T-cell (primary cell): ENCODE measurements at regions of chr19 and their contacts with region 1.

Region 1: GRCh38 chr19:44512326-44513298 is 12.3 kb upstream of the ZNF180 start:
- DNase-seq: peak in 3 of 35 experiments; percentile 4 to 13 (median 9)
- ATAC-seq: no peak
- H3K4me3 ChIP-seq: no peak overlapping the region
- H3K4me3 Mint-ChIP-seq: no peak overlapping the region
- H3K27ac ChIP-seq: no peak overlapping the region
- H3K27ac Mint-ChIP-seq: no peak overlapping the region
- H3K4me1 ChIP-seq: no peaks in the 10 kb centered on the region
- H3K4me1 Mint-ChIP-seq: no peaks in the 10 kb centered on the region
- H3K27me3 ChIP-seq: peaks cover 0 to 16% of the 10 kb centered on the region in 2 experiments
- H3K27me3 Mint-ChIP-seq: peaks cover 21 to 37% of the 10 kb centered on the region in 2 donors

Region 2: GRCh38 chr19:43983912-43984686 is 528.5 kb before region 1 on chr19 and contains the start of gene ZNF155:
- CTCF ChIA-PET with region 1: no interaction called
- POLR2A ChIA-PET with region 1: interaction called in 1 of 2 experiments, 10 read pairs
- DNase-seq: peak; percentile 26 to 82 (median 51)
- ATAC-seq: peak; percentile 92 to 98 (median 96)
- H3K4me3 ChIP-seq: peak within 1 kb of the TSS; percentile 56 to 91
- H3K4me3 Mint-ChIP-seq: peak within 1 kb of the TSS; percentile 88 to 99 (median 95)
- H3K27ac ChIP-seq: peak within 1 kb of the TSS; percentile 46
- H3K27ac Mint-ChIP-seq: peak within 1 kb of the TSS; percentile 86 to 91
- H3K4me1 ChIP-seq: peaks cover 2 to 12% of the 10 kb centered on the region in 2 experiments
- H3K4me1 Mint-ChIP-seq: peaks cover 3 to 21% (median 12%) of the 10 kb centered on the region in 3 donors
- H3K27me3 ChIP-seq: no peaks in the 10 kb centered on the region
- H3K27me3 Mint-ChIP-seq: no peaks in the 10 kb centered on the region
- total RNA-seq, gene ZNF155: 4.6 to 12.4 (median 11.3) TPM

Region 3: DNA sequence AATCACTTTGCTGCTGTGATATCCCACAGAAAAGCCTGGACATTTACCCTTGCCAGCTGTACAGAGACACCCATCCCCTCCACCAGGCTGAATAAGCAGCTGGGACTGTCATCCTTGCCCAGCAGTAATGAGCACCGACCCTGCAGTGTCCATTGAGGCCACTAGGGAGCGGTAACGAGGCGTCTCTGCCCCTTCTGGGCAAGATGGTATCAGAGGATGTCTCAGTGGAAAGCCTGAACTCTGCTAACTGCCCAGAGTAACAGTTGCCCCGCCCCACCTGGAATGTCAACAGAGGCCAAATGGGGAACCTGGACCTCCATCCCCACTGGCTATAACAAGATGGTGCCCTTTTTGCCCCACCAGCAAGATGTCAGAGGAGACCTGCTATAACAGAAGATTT is 39.7 kb after region 1 on chr19:
- CTCF ChIA-PET with region 1: no interaction called
- POLR2A ChIA-PET with region 1: no interaction called
- DNase-seq: peak in 9 of 35 experiments; percentile 3 to 15 (median 7)
- ATAC-seq: no peak
- H3K4me3 ChIP-seq: no peak overlapping the region
- H3K4me3 Mint-ChIP-seq: no peak overlapping the region
- H3K27ac ChIP-seq: no peak overlapping the region
- H3K27ac Mint-ChIP-seq: no peak overlapping the region
- H3K4me1 ChIP-seq: no peaks in the 10 kb centered on the region
- H3K4me1 Mint-ChIP-seq: no peaks in the 10 kb centered on the region
- H3K27me3 ChIP-seq: peaks cover 0 to 6% of the 10 kb centered on the region in 2 experiments
- H3K27me3 Mint-ChIP-seq: peaks cover 9 to 16% of the 10 kb centered on the region in 2 donors

Region 4: GRCh38 chr19:44587963-44588770 is 75.6 kb after region 1 on chr19:
- CTCF ChIA-PET with region 1: no interaction called
- POLR2A ChIA-PET with region 1: no interaction called
- DNase-seq: peak in 1 of 35 experiments; percentile 8
- ATAC-seq: no peak
- H3K4me3 ChIP-seq: no peak overlapping the region
- H3K4me3 Mint-ChIP-seq: no peak overlapping the region
- H3K27ac ChIP-seq: no peak overlapping the region
- H3K27ac Mint-ChIP-seq: no peak overlapping the region
- H3K4me1 ChIP-seq: no peaks in the 10 kb centered on the region
- H3K4me1 Mint-ChIP-seq: no peaks in the 10 kb centered on the region
- H3K27me3 ChIP-seq: peaks cover 0 to 14% of the 10 kb centered on the region in 2 experiments
- H3K27me3 Mint-ChIP-seq: peaks cover 6 to 26% of the 10 kb centered on the region in 2 donors